ENCODE measurements at regions of chr7 and their contacts with region 1.

Region 1: GRCh38 chr7:32957326-32958045 is at the start of gene FKBP9:
- DNase-seq: peak; percentile 93 to 96
- ATAC-seq: peak; percentile 93 to 95
- H3K4me3 ChIP-seq: peak within 1 kb of the TSS; percentile 84
- H3K27ac ChIP-seq: peak within 1 kb of the TSS; percentile 96 to 98
- H3K4me1 ChIP-seq: peaks cover 9% of the 10 kb centered on the region; the same call in 1 of the 3 replicates
- CTCF ChIP-seq: no peak
- EP300 ChIP-seq: no peak
- POLR2A ChIP-seq: peak; percentile 81
- RAD21 ChIP-seq: no peak; a peak in 1 of 5 replicates
- polyA plus RNA-seq, gene FKBP9: 130 and 140 TPM in 2 replicates

Region 2: DNA sequence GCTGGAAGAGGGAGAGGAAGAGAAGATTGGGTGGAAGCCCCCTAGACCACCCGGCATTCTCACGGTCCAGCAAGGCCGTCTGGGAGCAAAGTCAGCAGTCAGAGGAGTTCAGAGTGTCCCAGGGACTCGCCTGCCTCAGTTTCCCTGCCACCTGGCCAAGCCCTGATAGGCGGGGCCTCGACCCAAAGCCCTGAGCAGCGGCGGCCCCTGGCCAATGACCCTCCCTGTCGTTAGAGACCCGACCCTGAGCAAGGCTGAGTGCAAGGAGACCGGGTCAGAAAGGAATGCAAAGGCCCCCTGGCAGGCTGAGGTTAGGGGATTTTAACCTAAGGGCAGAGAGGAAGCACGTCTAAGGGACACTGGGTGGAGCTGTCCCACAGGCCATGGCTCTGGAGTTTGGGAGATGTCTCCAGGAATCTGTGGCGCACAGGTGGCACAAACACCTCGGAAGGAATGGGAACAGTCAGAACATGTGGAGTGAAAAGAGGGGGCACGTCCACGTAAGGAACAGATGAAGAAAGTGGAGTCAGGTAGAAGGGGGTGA is 690.5 kb before region 1 on chr7:
- CTCF ChIA-PET with region 1: no interaction called
- POLR2A ChIA-PET with region 1: no interaction called
- DNase-seq: no peak
- ATAC-seq: peak in 1 of 2 experiments; percentile 30; a peak in 2 of 6 replicates
- H3K4me3 ChIP-seq: no peak overlapping the region
- H3K27ac ChIP-seq: no peak overlapping the region
- H3K4me1 ChIP-seq: no peaks in the 10 kb centered on the region
- CTCF ChIP-seq: no peak
- EP300 ChIP-seq: no peak
- POLR2A ChIP-seq: no peak
- RAD21 ChIP-seq: peak in 1 of 2 experiments; percentile 25; a peak in 1 of 5 replicates

Region 3: GRCh38 chr7:32891800-32892520 is 65.5 kb before region 1 on chr7:
- CTCF ChIA-PET with region 1: no interaction called
- POLR2A ChIA-PET with region 1: interaction called, 18 read pairs
- DNase-seq: peak; percentile 85 to 96
- ATAC-seq: peak; percentile 71 to 85
- H3K4me3 ChIP-seq: peak overlapping the region; percentile 80
- H3K27ac ChIP-seq: peak overlapping the region; percentile 97 to 99
- H3K4me1 ChIP-seq: peaks cover 37% of the 10 kb centered on the region
- CTCF ChIP-seq: no peak
- EP300 ChIP-seq: no peak
- POLR2A ChIP-seq: peak; percentile 76
- RAD21 ChIP-seq: no peak

Region 4: GRCh38 chr7:32942786-32943653 is 14.5 kb before region 1 on chr7:
- CTCF ChIA-PET with region 1: interaction called, 9 read pairs
- POLR2A ChIA-PET with region 1: interaction called, 18 read pairs
- DNase-seq: peak; percentile 81 to 89
- ATAC-seq: peak; percentile 96 to 97
- H3K4me3 ChIP-seq: peak overlapping the region; percentile 84
- H3K27ac ChIP-seq: peak overlapping the region; percentile 96 to 98
- H3K4me1 ChIP-seq: no peaks in the 10 kb centered on the region
- CTCF ChIP-seq: peak; percentile 74
- EP300 ChIP-seq: no peak
- POLR2A ChIP-seq: peak; percentile 29
- RAD21 ChIP-seq: peak; percentile 33 to 72; a peak in 4 of 5 replicates

Region 5: GRCh38 chr7:33062782-33063443 is 105.4 kb after region 1 on chr7:
- CTCF ChIA-PET with region 1: interaction called, 3 read pairs
- POLR2A ChIA-PET with region 1: interaction called, 16 read pairs
- DNase-seq: peak; percentile 93 to 95
- ATAC-seq: peak; percentile 97 to 99
- H3K4me3 ChIP-seq: peak overlapping the region; percentile 95
- H3K27ac ChIP-seq: peak overlapping the region; percentile 89 to 94
- H3K4me1 ChIP-seq: peaks cover 11% of the 10 kb centered on the region; the same call in 2 of the 3 replicates
- CTCF ChIP-seq: no peak
- EP300 ChIP-seq: no peak
- POLR2A ChIP-seq: peak; percentile 88
- RAD21 ChIP-seq: no peak

Measured in A549 (cell line).